ENCODE measurements at regions of chr14 and their contacts with region 1.

Region 1: DNA sequence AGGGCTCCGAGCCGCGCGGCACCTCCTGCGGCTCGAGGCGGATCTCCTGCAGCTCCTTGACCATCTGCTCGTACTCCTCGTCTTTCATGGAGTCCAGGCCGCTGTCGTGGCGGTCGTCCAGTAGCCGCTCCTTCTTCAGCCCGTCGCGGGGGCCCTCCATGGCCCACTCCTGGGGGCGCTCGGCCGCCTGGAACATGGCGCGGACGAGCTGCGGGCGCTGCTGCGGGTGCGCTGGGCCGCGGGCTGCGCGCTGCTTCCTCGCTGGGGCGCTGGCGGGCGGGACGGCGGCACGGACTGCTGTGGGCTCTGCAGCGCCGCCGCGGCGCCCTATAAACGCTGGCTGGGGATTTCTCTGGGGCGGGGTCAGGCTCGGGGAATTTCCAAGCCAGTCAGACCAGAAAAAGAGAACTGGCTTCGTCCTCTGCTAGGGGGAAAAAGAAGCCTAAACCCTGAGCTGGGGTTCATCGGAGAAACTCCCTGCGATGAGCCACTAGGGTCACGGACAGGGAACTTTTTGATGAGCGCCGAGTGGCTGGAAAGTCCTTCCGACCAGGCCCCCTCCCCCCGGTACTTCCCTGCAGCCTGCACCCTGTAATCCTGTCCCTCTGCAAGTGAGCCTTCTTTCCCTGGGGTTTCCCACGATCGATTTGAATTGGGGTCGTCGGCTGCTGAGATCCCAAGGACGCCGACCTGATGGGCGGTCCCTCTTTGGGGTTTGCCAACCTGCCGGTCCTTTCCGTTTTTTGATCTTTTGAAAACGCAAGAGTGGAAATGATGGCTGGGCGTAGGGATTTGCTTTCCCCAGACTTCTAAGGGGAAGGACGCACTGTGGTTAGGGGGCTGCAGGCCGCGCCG is at the start of gene NFKBIA:
- DNase-seq: peak; percentile 92
- H3K4me3 Mint-ChIP-seq: peak within 1 kb of the TSS; percentile 92
- H3K27ac Mint-ChIP-seq: peak within 1 kb of the TSS; percentile 95
- H3K4me1 Mint-ChIP-seq: peaks cover 54% of the 10 kb centered on the region
- H3K27me3 Mint-ChIP-seq: no peaks in the 10 kb centered on the region
- total RNA-seq, gene NFKBIA: 102 to 109 TPM

Region 2: GRCh38 chr14:34982417-34983147 is 422.1 kb before region 1 on chr14 and contains the start of gene SRP54:
- CTCF ChIA-PET with region 1: interaction called, 3 read pairs
- POLR2A ChIA-PET with region 1: interaction called, 56 read pairs
- DNase-seq: peak; percentile 100
- H3K4me3 Mint-ChIP-seq: no peak within 1 kb of the TSS
- H3K27ac Mint-ChIP-seq: no peak within 1 kb of the TSS
- H3K4me1 Mint-ChIP-seq: peaks cover 17% of the 10 kb centered on the region
- H3K27me3 Mint-ChIP-seq: no peaks in the 10 kb centered on the region
- total RNA-seq, gene SRP54: 69.4 to 71.2 TPM

Region 3: DNA sequence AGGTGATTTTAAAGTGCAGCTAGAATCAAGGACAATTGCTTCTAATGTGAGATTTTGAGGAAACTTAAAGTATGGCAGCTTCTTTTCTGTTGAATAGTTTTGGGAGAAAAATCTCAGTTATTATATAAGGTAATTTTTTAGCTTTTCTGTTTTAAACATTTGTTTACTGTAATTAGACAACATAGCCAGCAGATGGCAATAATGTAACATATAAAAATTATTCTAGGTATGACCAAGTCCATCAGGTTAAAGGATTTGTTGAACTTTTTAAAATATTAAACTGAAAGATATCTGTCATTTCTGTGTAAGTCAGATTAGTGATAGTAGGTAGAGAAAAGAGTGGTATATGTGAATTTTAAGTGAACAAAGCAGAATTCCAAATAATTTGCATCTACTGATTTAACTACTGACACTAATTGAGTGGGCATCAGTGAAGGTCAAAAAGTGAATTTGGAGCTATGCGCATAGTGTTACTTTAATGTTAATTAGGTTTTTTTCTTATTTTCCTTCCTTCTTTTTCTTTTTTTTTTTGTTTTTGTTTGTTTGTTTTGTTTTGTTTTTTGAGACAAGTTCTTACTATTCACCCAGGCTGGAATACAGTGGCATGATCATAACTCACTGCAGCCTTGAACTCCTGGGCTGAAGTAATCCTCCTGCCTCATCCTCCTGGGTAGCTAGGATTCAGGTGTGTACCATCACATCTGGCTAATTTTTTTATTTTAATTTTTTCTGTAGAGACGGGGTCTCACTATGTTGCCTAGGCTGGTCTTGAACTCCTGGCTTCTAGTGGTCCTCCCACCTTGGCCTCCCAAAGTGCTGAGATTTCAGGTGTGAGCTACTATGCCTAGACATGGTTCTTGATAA is 263.7 kb before region 1 on chr14:
- CTCF ChIA-PET with region 1: interaction called, 18 read pairs
- POLR2A ChIA-PET with region 1: interaction called, 11 read pairs
- DNase-seq: no peak
- H3K4me3 Mint-ChIP-seq: no peak overlapping the region
- H3K27ac Mint-ChIP-seq: no peak overlapping the region
- H3K4me1 Mint-ChIP-seq: peaks cover 9% of the 10 kb centered on the region
- H3K27me3 Mint-ChIP-seq: no peaks in the 10 kb centered on the region

Region 4: GRCh38 chr14:35229495-35230089 is 175.1 kb before region 1 on chr14:
- CTCF ChIA-PET with region 1: interaction called, 20 read pairs
- POLR2A ChIA-PET with region 1: interaction called, 28 read pairs
- DNase-seq: no peak
- H3K4me3 Mint-ChIP-seq: no peak overlapping the region
- H3K27ac Mint-ChIP-seq: no peak overlapping the region
- H3K4me1 Mint-ChIP-seq: peaks cover 19% of the 10 kb centered on the region
- H3K27me3 Mint-ChIP-seq: no peaks in the 10 kb centered on the region

Region 5: DNA sequence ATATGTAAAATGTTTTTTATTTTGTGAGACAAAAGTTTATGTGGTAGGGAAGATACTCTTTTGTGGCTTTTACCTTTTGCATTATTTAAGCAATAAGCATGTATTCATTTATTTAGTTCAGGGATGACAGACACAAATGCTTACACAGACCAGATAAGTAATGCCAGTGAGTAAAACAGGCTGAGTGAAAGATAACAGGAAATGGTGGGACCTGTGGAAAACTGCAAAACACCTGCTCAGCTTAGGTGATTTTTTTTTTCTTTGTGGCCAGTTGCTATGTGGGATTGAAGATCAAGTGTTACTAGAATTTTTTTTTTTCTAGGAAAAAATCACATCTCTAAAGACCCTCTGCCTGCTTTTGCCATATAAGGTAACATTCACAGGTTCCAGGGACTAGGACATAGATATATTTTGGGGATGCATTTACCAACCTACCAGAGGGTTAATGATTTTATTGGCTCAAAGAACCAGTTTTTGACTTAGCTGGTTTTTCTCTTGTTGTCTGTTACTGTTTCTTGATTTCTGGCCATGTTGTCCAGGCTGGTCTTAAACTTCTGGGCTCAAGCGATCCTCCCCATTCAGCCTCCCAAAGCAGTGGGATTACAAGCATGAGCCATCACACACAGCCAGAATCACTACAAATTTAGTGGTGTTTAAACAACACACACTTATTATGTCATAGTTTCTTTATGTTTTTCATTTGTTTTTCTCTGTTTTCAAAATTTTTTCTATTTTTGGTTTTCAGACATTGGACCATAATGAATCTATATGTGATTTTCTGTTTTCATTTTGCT is 102.7 kb before region 1 on chr14:
- CTCF ChIA-PET with region 1: interaction called, 5 read pairs
- POLR2A ChIA-PET with region 1: interaction called, 155 read pairs
- DNase-seq: no peak
- H3K4me3 Mint-ChIP-seq: peak overlapping the region; percentile 6
- H3K27ac Mint-ChIP-seq: peak overlapping the region; percentile 44
- H3K4me1 Mint-ChIP-seq: peaks cover 55% of the 10 kb centered on the region
- H3K27me3 Mint-ChIP-seq: no peaks in the 10 kb centered on the region

Region 6: GRCh38 chr14:35390577-35391387 is 13.9 kb before region 1 on chr14:
- CTCF ChIA-PET with region 1: interaction called, 9 read pairs
- POLR2A ChIA-PET with region 1: interaction called, 37 read pairs
- DNase-seq: no peak
- H3K4me3 Mint-ChIP-seq: no peak overlapping the region
- H3K27ac Mint-ChIP-seq: no peak overlapping the region
- H3K4me1 Mint-ChIP-seq: peaks cover 11% of the 10 kb centered on the region
- H3K27me3 Mint-ChIP-seq: no peaks in the 10 kb centered on the region

Region 7: DNA sequence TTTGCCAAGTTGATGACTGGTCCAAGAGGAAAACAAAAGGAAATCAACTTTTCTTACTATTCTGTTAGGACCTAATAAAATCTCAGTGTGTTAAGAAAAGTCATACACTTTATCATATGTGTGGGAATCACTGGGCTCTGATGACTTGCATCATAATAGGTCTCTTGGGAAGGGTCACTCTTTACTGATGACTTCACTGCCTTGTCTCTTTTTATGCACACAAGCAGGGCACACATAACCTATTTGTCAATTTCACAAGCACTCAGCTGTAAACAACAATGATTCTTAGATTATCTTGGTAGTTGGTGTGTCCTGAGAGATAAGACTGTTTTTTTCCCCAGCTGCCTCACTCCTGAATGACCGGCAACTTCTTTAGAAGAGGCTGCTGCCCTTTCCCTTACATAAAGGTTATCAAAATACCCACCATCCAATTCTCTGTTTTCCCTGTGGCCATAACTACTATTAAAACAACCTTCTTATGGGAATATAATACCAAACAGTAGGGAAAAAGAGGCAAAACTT is 78.4 kb after region 1 on chr14:
- CTCF ChIA-PET with region 1: no interaction called
- POLR2A ChIA-PET with region 1: no interaction called
- DNase-seq: no peak
- H3K4me3 Mint-ChIP-seq: no peak overlapping the region
- H3K27ac Mint-ChIP-seq: no peak overlapping the region
- H3K4me1 Mint-ChIP-seq: peaks cover 11% of the 10 kb centered on the region
- H3K27me3 Mint-ChIP-seq: no peaks in the 10 kb centered on the region

Region 8: GRCh38 chr14:35576260-35576659 is 171.6 kb after region 1 on chr14:
- CTCF ChIA-PET with region 1: no interaction called
- POLR2A ChIA-PET with region 1: no interaction called
- DNase-seq: no peak
- H3K4me3 Mint-ChIP-seq: no peak overlapping the region
- H3K27ac Mint-ChIP-seq: no peak overlapping the region
- H3K4me1 Mint-ChIP-seq: peaks cover 3% of the 10 kb centered on the region
- H3K27me3 Mint-ChIP-seq: no peaks in the 10 kb centered on the region